ENCODE measurements at regions of chr17 and their contacts with region 1.

Region 1: DNA sequence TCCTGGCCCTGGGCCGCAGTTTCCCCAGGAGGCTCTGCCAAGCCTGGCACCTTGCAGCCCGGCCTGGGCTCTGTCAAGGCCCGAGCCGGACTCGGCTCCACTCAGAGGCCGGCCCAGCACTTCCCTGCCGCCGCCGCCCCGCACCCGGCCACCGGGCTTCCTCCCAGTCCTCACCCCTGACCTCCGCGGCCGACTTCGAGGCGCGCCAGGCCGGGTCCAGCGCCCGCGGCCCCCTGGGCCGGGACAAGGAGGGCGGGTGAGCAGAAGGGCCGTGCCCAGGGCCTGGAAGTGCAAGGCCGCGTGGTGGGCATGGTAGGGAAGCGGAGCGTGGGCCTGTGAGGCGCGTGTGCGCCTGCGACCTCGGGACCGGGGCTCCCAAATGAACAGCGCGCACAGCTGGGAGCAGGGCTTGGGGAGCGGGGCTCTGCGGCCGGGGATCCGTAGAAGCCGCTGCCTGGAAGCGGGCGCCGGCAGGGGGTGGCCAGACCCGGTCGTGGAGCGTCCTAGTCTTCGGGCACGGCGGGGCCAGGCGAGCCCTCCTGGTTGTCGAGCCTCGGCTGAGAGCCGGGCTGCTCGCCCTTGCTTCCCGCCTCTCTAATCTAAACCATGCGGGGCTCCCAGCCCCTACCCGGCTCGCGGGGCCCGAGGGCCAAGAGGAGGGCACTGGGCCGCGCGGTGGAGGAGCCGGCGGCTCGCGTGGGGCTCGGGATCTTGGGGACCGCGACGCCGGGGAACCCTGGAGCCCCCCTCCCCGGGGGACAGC is 503 bp upstream of the TBX4 start:
- DNase-seq: peak; percentile 35
- ATAC-seq: peak; percentile 24
- H3K4me3 ChIP-seq: peak overlapping the region in 3 of 5 experiments; percentile 9 to 32 (median 25)
- H3K4me3 Mint-ChIP-seq: peak overlapping the region; percentile 77
- H3K27ac ChIP-seq: no peak overlapping the region
- H3K27ac Mint-ChIP-seq: no peak overlapping the region
- H3K4me1 ChIP-seq: peaks cover 30 to 44% of the 10 kb centered on the region in 2 donors
- H3K4me1 Mint-ChIP-seq: peaks cover 22% of the 10 kb centered on the region
- H3K27me3 ChIP-seq: peaks cover 2 to 69% (median 55%) of the 10 kb centered on the region in 4 experiments
- H3K27me3 Mint-ChIP-seq: peaks cover 55% of the 10 kb centered on the region
- CTCF ChIP-seq: no peak

Region 2: GRCh38 chr17:61285526-61286320 is 166.0 kb before region 1 on chr17:
- CTCF ChIA-PET with region 1: no interaction called
- POLR2A ChIA-PET with region 1: no interaction called
- intact Hi-C with region 1: no loop called
- DNase-seq: no peak
- ATAC-seq: no peak
- H3K4me3 ChIP-seq: no peak overlapping the region
- H3K4me3 Mint-ChIP-seq: no peak overlapping the region
- H3K27ac ChIP-seq: no peak overlapping the region
- H3K27ac Mint-ChIP-seq: no peak overlapping the region
- H3K4me1 ChIP-seq: no peaks in the 10 kb centered on the region
- H3K4me1 Mint-ChIP-seq: no peaks in the 10 kb centered on the region
- H3K27me3 ChIP-seq: no peaks in the 10 kb centered on the region
- H3K27me3 Mint-ChIP-seq: no peaks in the 10 kb centered on the region
- CTCF ChIP-seq: no peak

Region 3: DNA sequence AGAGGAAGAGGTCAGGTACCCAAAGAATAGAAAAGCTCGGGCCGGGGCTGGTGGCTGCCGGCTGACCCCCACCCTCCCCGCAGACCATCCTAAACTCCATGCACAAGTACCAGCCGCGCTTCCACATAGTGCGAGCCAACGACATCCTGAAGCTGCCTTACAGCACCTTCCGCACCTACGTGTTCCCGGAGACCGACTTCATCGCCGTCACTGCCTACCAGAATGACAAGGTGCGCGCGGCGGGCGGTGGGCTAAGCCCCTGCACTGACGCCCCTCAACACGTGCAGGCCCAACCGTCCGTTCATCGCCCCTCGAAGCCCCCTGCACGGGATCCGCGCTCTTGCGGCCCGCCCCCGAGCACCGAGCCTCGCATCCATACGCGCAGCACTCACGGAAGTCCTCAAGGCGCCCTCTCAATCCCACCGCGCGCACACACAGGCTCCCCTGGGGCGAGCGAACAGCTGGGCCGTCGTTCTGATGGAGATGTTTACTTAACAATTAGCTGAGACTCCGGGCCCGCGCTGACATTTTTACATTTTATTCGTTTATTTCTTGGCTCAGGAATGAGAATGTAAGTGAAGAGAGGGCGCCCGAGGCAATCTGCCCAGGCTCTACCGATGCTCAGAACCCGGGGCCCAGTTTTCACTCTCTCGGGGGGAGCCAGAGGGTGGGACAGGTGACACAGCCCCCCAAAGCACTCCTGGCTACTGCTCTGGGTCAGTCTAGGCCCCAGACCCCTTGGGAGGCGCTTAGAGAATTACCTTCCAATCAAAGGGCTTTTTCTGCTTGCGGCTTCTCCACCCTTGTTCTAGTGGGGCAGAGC is 48.5 kb before region 1 on chr17:
- CTCF ChIA-PET with region 1: no interaction called
- POLR2A ChIA-PET with region 1: no interaction called
- intact Hi-C with region 1: loop called (anchors 2 kb)
- DNase-seq: peak; percentile 78
- ATAC-seq: no peak
- H3K4me3 ChIP-seq: peak overlapping the region in 3 of 5 experiments; percentile 25 to 56 (median 44)
- H3K4me3 Mint-ChIP-seq: peak overlapping the region; percentile 85
- H3K27ac ChIP-seq: no peak overlapping the region
- H3K27ac Mint-ChIP-seq: peak overlapping the region; percentile 59
- H3K4me1 ChIP-seq: peaks cover 69 to 81% of the 10 kb centered on the region in 2 donors
- H3K4me1 Mint-ChIP-seq: peaks cover 49% of the 10 kb centered on the region
- H3K27me3 ChIP-seq: peaks cover 0 to 92% (median 74%) of the 10 kb centered on the region in 4 experiments
- H3K27me3 Mint-ChIP-seq: peaks cover 63% of the 10 kb centered on the region
- CTCF ChIP-seq: no peak

Region 4: DNA sequence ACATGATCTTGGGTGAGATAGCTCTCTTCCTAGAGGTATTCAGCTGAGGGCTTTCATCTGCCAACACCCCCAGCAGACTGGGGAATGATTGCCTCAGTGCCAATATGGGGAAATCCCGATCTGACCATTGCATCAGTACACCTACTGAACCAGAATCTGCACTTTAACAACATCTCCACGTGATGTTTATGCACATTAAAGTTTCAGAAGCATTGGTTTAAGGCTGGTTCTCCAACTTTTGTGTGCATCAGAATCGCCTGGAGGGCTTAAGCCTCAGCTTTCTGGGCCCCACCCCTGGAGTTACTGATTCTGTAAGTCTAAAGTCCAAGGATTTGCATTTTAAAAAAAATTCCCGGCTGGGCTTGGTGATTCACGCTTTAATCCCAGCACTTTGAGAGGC is 737.0 kb after region 1 on chr17:
- CTCF ChIA-PET with region 1: no interaction called
- POLR2A ChIA-PET with region 1: no interaction called
- intact Hi-C with region 1: no loop called
- DNase-seq: no peak
- ATAC-seq: no peak
- H3K4me3 ChIP-seq: no peak overlapping the region
- H3K4me3 Mint-ChIP-seq: no peak overlapping the region
- H3K27ac ChIP-seq: no peak overlapping the region
- H3K27ac Mint-ChIP-seq: no peak overlapping the region
- H3K4me1 ChIP-seq: no peaks in the 10 kb centered on the region
- H3K4me1 Mint-ChIP-seq: no peaks in the 10 kb centered on the region
- H3K27me3 ChIP-seq: no peaks in the 10 kb centered on the region
- H3K27me3 Mint-ChIP-seq: peaks cover 14% of the 10 kb centered on the region
- CTCF ChIP-seq: no peak